ENCODE measurements at regions of chr17 and their contacts with region 1.

Region 1: DNA sequence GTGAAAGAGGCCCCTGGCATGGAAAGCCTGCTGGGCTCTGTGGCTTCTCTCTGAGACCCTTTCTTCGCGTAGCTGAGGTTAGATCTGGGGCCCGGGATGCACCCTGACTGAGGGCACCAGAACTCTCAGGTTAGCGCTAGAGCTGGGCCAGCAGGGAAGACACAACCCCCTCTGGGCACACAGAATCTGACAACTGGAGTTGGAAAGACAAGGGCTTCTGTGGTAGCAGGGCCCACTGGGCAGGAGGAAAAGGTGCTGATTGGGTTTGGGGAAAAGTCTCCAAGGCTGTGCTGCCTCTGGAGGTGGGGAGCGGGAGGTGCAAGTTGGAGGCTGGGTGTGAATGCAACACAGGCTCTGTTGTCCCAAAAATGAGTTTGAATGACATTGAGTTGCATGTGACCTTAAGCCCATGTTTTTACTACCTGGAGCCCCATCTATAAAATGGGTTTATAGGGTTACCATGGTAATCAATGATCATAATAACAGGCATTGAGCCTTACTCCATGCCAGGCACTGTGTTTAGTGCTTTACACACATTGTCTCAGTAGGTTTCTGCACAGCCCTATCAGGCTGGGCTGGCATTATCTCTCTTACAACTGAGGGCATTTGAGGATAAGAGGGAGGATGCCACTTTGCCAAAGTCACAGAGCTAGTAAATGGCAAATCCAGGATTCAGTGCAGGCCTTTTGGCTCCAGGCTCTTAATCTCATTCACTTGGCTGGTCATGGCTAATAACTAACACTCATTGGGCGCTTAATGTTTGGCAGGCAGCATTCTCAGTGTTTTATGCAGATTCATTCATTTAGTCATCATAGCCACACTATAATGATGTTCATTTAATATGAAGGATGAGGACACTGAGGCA is 9.5 kb upstream of the IGFBP4 start:
- DNase-seq: peak in 1 of 2 experiments; percentile 72
- H3K4me3 ChIP-seq: no peak overlapping the region
- H3K27ac ChIP-seq: no peak overlapping the region
- H3K4me1 ChIP-seq: peaks cover 0 to 3% (median 2%) of the 10 kb centered on the region in 4 experiments; a peak in 4 of 7 replicates
- H3K27me3 ChIP-seq: no peaks in the 10 kb centered on the region
- CTCF ChIP-seq: peak; percentile 72 to 91 (median 86)
- EP300 ChIP-seq: no peak
- POLR2A ChIP-seq: 0 out of 3 replicates have a peak, but pooled peaks of 1 of the 2 experiments have one; percentile 26
- RAD21 ChIP-seq: peak; percentile 73 to 76

Region 2: GRCh38 chr17:40417609-40418427 is 16.0 kb before region 1 on chr17 and contains the start of gene TOP2A:
- CTCF ChIA-PET with region 1: interaction called, 32 read pairs
- POLR2A ChIA-PET with region 1: interaction called, 5 read pairs
- DNase-seq: peak; percentile 98 to 99
- H3K4me3 ChIP-seq: peak within 1 kb of the TSS; percentile 81 to 97 (median 95)
- H3K27ac ChIP-seq: peak within 1 kb of the TSS; percentile 55; the same call in 1 of the 2 replicates
- H3K4me1 ChIP-seq: peaks cover 2 to 10% (median 6%) of the 10 kb centered on the region in 4 experiments
- H3K27me3 ChIP-seq: no peaks in the 10 kb centered on the region
- CTCF ChIP-seq: no peak
- EP300 ChIP-seq: no peak
- POLR2A ChIP-seq: 0 out of 3 replicates have a peak, but pooled peaks of 1 of the 2 experiments have one; percentile 53
- RAD21 ChIP-seq: no peak
- total RNA-seq, gene TOP2A: 276 and 291 TPM in 2 replicates

Region 3: GRCh38 chr17:40422990-40423616 is 10.7 kb before region 1 on chr17:
- CTCF ChIA-PET with region 1: interaction called, 50 read pairs
- POLR2A ChIA-PET with region 1: interaction called, 4 read pairs
- DNase-seq: peak in 1 of 2 experiments; percentile 73
- H3K4me3 ChIP-seq: peak overlapping the region in 1 of 4 experiments; percentile 11; a peak in 1 of 8 replicates
- H3K27ac ChIP-seq: no peak overlapping the region
- H3K4me1 ChIP-seq: peaks cover 4 to 21% (median 10%) of the 10 kb centered on the region in 4 experiments
- H3K27me3 ChIP-seq: no peaks in the 10 kb centered on the region
- CTCF ChIP-seq: peak; percentile 1 to 16 (median 4); a peak in 3 of 4 replicates
- EP300 ChIP-seq: no peak; a peak in 1 of 3 replicates
- POLR2A ChIP-seq: no peak
- RAD21 ChIP-seq: no peak

Measured in H1 (cell line).